ENCODE measurements at regions of chr1 and their contacts with region 1.

Region 1: GRCh38 chr1:24150234-24151174 is 7.6 kb upstream of the IL22RA1 start:
- DNase-seq: peak; percentile 97
- H3K4me3 Mint-ChIP-seq: peak overlapping the region; percentile 74
- H3K27ac Mint-ChIP-seq: peak overlapping the region; percentile 65
- H3K4me1 Mint-ChIP-seq: peaks cover 15% of the 10 kb centered on the region
- H3K27me3 Mint-ChIP-seq: peaks cover 35% of the 10 kb centered on the region

Region 2: GRCh38 chr1:24070821-24071393 is 79.6 kb before region 1 on chr1:
- intact Hi-C with region 1: loop called (anchors 2 kb)
- DNase-seq: peak; percentile 92
- H3K4me3 Mint-ChIP-seq: no peak overlapping the region
- H3K27ac Mint-ChIP-seq: no peak overlapping the region
- H3K4me1 Mint-ChIP-seq: peaks cover 4% of the 10 kb centered on the region
- H3K27me3 Mint-ChIP-seq: peaks cover 8% of the 10 kb centered on the region

Region 3: DNA sequence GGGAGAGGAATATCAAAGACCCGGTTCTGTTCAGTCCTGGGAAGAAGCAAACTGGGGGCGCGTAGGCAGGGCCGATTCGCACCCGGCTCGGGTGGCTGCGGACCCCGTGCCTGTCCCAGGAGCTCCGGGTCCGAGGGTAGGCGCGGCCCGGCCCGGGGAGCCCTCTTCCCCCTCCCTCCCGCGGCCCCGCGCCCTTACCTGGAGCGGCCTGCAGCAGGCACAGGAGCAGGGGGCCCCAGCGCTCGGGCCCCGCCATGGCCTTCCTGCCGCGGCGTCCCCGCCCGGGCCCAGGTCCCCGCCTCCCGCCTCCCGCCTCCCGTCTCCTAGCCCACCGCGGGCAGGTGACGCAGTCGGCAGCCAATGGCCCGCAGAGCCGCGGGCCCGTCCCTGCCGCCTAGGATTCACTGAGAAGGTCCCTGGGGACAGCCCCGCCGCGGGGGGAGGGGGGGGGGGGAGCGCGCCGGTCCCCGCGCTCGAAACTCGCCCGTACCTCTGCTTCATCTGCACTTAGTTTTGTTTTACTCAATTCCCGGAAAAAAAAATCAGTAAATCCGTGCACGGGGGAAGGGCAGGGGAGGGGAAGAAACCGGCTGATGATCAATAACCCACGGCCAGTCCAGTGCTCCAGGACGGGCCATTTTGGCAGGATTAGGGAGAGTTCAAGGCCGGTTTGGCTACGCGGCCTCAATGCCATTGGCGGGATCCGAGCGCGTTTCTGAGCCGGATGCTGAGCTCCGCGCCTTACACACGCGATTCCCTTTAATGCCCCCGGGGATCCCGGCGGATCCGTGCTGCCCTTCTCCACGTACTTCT is 36.7 kb after region 1 on chr1 and contains the start of gene IFNLR1:
- intact Hi-C with region 1: loop called (anchors 2 kb)
- DNase-seq: peak; percentile 90
- H3K4me3 Mint-ChIP-seq: peak within 1 kb of the TSS; percentile 82
- H3K27ac Mint-ChIP-seq: peak within 1 kb of the TSS; percentile 78
- H3K4me1 Mint-ChIP-seq: peaks cover 34% of the 10 kb centered on the region
- H3K27me3 Mint-ChIP-seq: peaks cover 2% of the 10 kb centered on the region
- total RNA-seq, gene IFNLR1: 5.3 and 5.6 TPM in 2 replicates

Region 4: GRCh38 chr1:24206516-24207394 is 56.3 kb after region 1 on chr1:
- intact Hi-C with region 1: no loop called
- DNase-seq: no peak
- H3K4me3 Mint-ChIP-seq: no peak overlapping the region
- H3K27ac Mint-ChIP-seq: no peak overlapping the region
- H3K4me1 Mint-ChIP-seq: peaks cover 13% of the 10 kb centered on the region
- H3K27me3 Mint-ChIP-seq: peaks cover 5% of the 10 kb centered on the region

Region 5: GRCh38 chr1:24635195-24635843 is 484.8 kb after region 1 on chr1:
- intact Hi-C with region 1: loop called (anchors 2 kb)
- DNase-seq: peak; percentile 69
- H3K4me3 Mint-ChIP-seq: no peak overlapping the region
- H3K27ac Mint-ChIP-seq: no peak overlapping the region
- H3K4me1 Mint-ChIP-seq: peaks cover 7% of the 10 kb centered on the region
- H3K27me3 Mint-ChIP-seq: peaks cover 15% of the 10 kb centered on the region

Measured in activated CD4-positive, alpha-beta T cell treated with anti-CD3 and anti-CD28 coated beads, Interleukin-2, amount 10 ng/mL, durations not matched to agents 24 days and 14 days (primary cell).